Sciatic nerve (tissue), 2 donors: ENCODE measurements at regions of chr18 and their contacts with region 1.

Region 1: DNA sequence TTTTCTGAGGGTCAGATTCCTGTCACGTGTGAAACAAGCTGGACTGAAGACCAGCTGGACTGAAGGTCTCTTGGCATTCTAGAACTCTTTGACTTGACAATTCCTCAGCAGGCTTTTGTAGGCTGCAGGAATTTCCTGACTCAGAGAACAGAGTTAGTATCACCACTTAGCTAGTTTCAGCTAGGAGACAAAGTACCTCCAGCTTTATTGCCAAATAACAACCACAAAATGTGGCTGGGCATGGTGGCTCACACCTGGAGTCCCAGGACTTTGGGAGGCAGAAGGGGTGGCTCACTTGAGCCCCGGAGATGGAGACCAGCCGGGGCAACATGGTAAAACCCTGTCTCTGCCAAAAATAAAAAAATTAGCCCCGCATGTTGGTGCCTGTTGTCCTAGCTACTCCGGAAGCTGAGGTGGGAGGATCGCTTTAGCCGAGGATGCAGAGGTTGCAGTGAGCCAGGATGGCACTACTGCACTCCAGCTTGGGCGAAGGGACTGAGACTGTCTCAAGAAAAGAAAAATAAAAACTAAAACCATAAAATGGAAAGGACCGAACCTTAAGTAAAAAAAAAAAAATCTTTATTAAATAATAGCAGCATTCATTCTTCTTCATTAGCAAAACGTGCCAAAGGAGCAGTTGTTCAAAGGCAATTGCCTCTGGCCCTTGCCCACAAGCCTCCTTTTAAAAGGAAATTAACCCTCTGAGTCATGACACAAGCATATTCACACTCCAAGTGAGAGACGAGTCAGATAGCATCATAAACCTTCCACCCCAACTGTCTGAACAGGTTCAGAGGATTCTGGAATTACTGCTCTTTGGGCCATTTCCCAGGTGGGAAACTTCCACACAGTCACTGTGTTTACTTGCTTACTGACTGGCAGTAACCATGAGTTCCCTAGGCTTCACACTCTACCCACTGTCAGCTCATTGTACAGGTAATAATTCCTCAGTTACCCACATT is 88.9 kb downstream of the MYL12B start:
- DNase-seq: no peak
- ATAC-seq: no peak

Region 2: DNA sequence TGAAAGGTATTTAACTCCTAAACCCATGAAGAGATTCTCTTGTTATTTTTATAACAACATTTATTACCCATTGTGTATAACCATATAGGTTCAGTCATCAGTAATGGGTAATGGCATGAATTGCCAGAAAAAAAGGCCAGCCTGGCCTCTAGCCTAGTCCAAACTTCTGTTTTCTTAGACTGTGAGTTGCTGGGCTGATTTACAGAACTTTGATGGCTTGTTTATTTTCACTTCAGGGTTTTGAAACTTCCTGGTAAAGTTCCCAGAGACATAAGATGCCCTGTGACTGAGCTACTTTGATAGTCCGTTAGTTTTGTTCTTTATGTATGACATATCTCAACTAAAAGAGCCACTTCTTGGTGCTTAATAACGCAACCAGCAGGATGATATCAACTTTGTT is 944.3 kb before region 1 on chr18:
- intact Hi-C with region 1: loop called (anchors 5 kb)
- DNase-seq: no peak
- ATAC-seq: no peak

Region 3: GRCh38 chr18:3115447-3116029 is 235.3 kb before region 1 on chr18:
- intact Hi-C with region 1: no loop called
- DNase-seq: no peak
- ATAC-seq: no peak

Region 4: DNA sequence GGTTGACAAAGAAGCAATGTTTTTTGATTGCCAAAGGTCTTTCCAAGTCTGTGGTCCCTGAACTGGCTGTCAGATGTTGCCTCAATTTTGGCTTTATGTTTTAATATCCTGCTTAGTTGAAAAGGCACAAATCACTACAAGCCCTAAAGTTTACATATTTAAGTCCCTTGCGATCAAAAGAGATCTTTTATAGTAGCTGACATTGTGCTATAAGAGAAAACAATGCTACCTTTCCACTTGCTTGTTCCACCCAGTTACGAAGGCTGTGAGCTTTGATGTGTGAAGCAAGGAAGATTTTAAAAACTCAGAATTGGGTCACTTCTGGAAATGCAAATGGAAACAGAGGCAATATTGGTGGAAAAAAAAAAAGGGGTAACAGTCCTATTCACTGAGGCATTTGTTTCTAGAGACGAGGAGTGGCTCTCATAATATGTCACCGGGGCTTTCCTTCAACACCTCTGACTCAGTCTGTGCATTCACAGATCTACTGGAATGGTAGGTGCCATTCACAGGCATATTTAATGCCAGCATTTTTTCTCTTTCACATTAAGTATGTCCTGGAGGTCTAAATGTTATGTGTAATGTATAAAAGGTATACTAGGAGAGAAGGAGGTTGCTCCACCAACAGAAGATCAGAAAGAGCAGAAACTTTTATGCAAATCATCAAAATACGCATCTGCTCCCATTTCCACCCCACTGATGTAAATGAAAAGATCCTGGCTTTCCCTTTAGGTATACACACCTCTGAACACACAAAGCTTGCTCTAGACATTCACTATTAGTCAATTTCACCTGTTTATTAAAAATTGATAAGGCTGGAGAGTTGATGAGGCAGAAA is 190.9 kb after region 1 on chr18:
- intact Hi-C with region 1: no loop called
- DNase-seq: no peak
- ATAC-seq: no peak